ENCODE measurements at regions of chrX and their contacts with region 1.

Region 1: GRCh38 chrX:40266490-40267333 is 169.0 kb upstream of the BCOR start:
- DNase-seq: no peak
- H3K4me3 ChIP-seq: peak overlapping the region; percentile 32 to 65 (median 50)
- H3K27ac ChIP-seq: peak overlapping the region; percentile 61 to 73 (median 65)
- H3K4me1 ChIP-seq: peaks cover 9 to 30% (median 10%) of the 10 kb centered on the region in 3 donors
- H3K27me3 ChIP-seq: no peaks in the 10 kb centered on the region
- CTCF ChIP-seq: peak in 5 of 6 experiments; percentile 50 to 70 (median 56)
- POLR2A ChIP-seq: no peak

Region 2: GRCh38 chrX:39730662-39731397 is 535.9 kb before region 1 on chrX:
- intact Hi-C with region 1: loop called (anchors 10 kb)
- DNase-seq: no peak
- H3K4me3 ChIP-seq: no peak overlapping the region
- H3K27ac ChIP-seq: no peak overlapping the region
- H3K4me1 ChIP-seq: peaks cover 0 to 39% (median 12%) of the 10 kb centered on the region in 3 donors
- H3K27me3 ChIP-seq: no peaks in the 10 kb centered on the region
- CTCF ChIP-seq: peak; percentile 31 to 61 (median 44)
- POLR2A ChIP-seq: no peak

Region 3: DNA sequence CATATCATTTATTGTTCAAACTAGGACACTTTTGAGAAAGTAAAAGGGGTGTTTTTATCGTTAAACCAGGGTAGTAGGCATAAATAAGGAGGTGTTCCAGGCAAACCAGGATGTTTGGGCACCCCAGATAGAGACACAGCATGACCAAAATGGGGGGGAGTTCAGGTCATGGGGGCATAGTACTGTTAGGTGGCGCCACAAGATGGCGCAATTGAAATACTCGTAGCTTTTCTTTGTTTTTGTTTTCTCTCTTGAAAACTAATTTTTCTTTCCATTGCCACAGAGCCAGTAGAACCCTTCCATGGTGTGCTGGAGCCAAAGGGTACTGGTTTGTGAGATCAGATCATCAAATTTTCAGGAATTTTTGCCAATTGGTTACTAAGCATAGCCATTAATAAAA is 452.3 kb before region 1 on chrX:
- intact Hi-C with region 1: loop called (anchors 10 kb)
- DNase-seq: no peak
- H3K4me3 ChIP-seq: no peak overlapping the region
- H3K27ac ChIP-seq: peak overlapping the region in 2 of 4 donors; percentile 33 to 47
- H3K4me1 ChIP-seq: peaks cover 0 to 9% (median 0%) of the 10 kb centered on the region in 3 donors
- H3K27me3 ChIP-seq: no peaks in the 10 kb centered on the region
- CTCF ChIP-seq: peak in 5 of 6 experiments; percentile 13 to 52 (median 38)
- POLR2A ChIP-seq: no peak

Region 4: GRCh38 chrX:40153335-40154249 is 113.1 kb before region 1 on chrX:
- intact Hi-C with region 1: no loop called
- DNase-seq: peak; percentile 3
- H3K4me3 ChIP-seq: peak overlapping the region; percentile 36 to 62 (median 49)
- H3K27ac ChIP-seq: peak overlapping the region; percentile 61 to 78 (median 64)
- H3K4me1 ChIP-seq: peaks cover 8 to 57% (median 38%) of the 10 kb centered on the region in 3 donors
- H3K27me3 ChIP-seq: peaks cover 0 to 11% (median 0%) of the 10 kb centered on the region in 4 donors
- CTCF ChIP-seq: peak in 2 of 6 experiments; percentile 11 to 24
- POLR2A ChIP-seq: no peak

Region 5: GRCh38 chrX:40188573-40189432 is 77.9 kb before region 1 on chrX:
- intact Hi-C with region 1: no loop called
- DNase-seq: no peak
- H3K4me3 ChIP-seq: no peak overlapping the region
- H3K27ac ChIP-seq: no peak overlapping the region
- H3K4me1 ChIP-seq: peaks cover 0 to 7% (median 3%) of the 10 kb centered on the region in 3 donors
- H3K27me3 ChIP-seq: no peaks in the 10 kb centered on the region
- CTCF ChIP-seq: no peak
- POLR2A ChIP-seq: no peak

Region 6: GRCh38 chrX:40496728-40497127 is 230.0 kb after region 1 on chrX:
- intact Hi-C with region 1: no loop called
- DNase-seq: no peak
- H3K4me3 ChIP-seq: no peak overlapping the region
- H3K27ac ChIP-seq: no peak overlapping the region
- H3K4me1 ChIP-seq: peaks cover 0 to 5% (median 0%) of the 10 kb centered on the region in 3 donors
- H3K27me3 ChIP-seq: no peaks in the 10 kb centered on the region
- CTCF ChIP-seq: no peak
- POLR2A ChIP-seq: no peak

Measured in esophagus squamous epithelium (tissue), 5 donors.